ENCODE measurements at regions of chr19 and their contacts with region 1.

Region 1: DNA sequence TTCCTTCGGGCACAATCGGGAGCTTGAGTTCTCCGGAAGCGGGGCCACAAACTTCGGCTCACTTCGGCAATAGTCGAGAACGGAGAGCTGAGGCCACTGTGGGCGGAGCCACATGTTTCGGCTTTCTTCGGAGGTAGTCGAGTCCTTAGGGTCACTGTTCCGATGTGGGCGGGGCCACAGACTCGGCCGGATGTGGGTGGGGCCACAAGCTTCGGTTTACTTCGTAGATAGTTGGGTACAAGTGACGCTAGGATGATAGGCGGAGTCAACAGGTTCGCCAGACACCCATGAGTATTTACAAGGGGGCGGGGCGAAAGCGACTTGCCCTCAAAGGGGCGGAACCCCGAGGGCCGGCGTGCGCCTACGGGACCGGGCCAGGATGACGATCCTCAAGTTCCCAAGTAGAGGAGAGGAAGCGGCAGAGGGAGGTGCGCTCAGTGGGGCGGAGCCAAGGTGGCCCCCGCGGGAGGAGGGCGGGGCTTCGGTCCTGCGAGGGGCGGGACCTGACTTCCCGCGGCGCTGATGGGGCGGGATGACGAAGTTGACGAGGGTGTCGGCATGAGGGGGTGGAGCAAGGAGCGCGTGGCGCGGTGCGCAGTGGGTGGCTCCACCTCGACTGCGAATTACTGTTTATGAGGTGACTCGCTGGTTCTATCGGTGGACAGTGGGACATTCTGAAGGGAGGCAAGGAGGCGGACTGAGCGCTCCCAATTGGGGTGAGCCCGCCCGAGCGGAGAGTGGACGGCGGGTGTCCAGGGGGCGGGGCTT is 539 bp upstream of the MBOAT7 start:
- DNase-seq: peak; percentile 100
- H3K4me3 ChIP-seq: peak overlapping the region; percentile 85
- H3K4me3 Mint-ChIP-seq: peak overlapping the region; percentile 88 to 99 (median 92)
- H3K27ac ChIP-seq: peak overlapping the region; percentile 100
- H3K27ac Mint-ChIP-seq: peak overlapping the region; percentile 97 to 100 (median 100)
- H3K4me1 ChIP-seq: peaks cover 22% of the 10 kb centered on the region
- H3K4me1 Mint-ChIP-seq: peaks cover 38 to 51% (median 41%) of the 10 kb centered on the region in 3 donors
- H3K27me3 ChIP-seq: no peaks in the 10 kb centered on the region
- H3K27me3 Mint-ChIP-seq: peaks cover 0 to 6% of the 10 kb centered on the region in 2 donors

Region 2: GRCh38 chr19:54107951-54108381 is 82.0 kb before region 1 on chr19:
- CTCF ChIA-PET with region 1: no interaction called
- POLR2A ChIA-PET with region 1: no interaction called
- DNase-seq: peak in 1 of 5 donors; percentile 35
- H3K4me3 ChIP-seq: no peak overlapping the region
- H3K4me3 Mint-ChIP-seq: no peak overlapping the region
- H3K27ac ChIP-seq: no peak overlapping the region
- H3K27ac Mint-ChIP-seq: no peak overlapping the region
- H3K4me1 ChIP-seq: peaks cover 7% of the 10 kb centered on the region
- H3K4me1 Mint-ChIP-seq: peaks cover 17 to 29% (median 23%) of the 10 kb centered on the region in 3 donors
- H3K27me3 ChIP-seq: no peaks in the 10 kb centered on the region
- H3K27me3 Mint-ChIP-seq: no peaks in the 10 kb centered on the region

Region 3: DNA sequence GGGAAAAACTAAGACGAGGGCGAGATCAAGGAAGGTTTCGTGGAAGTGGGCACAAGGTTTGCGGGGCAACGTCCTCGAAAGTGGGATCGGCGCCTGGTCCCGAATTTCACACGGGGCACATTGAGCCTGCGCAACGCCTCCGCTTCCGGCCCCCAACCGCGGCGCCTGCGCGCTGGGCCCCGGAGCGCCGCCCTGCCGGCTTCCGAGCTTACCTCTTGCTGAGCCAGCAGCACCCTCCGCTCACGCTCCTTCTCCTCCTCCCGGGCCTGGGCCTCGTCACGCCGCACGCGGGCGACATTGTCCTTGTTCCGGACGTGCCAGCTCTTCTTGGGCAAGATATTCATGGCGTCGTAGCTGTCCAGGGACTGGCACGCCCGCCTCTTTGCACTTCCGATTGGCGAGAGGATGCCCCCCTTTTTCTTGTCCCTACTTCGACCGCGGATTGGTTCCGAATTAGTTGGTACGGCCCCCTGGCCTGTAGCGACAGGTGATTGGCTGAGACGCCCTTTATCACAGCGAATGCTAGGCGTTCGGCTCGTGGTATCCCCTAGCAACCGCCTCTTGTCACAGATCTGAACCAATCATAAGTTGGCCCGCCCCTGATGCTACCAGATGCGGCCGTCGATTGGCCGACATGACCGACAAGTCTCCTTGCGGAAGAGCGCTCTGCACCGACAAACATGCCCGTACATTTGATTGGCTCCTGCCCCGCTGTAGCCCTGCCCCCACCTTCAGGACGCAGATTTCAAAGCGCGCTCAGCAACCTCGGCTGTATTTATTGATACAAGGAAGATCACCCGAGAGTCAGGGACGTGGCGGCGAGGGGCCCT is 30.4 kb before region 1 on chr19 and contains the start of gene LENG1:
- CTCF ChIA-PET with region 1: interaction called, 17 read pairs
- POLR2A ChIA-PET with region 1: interaction called, 49 read pairs
- DNase-seq: peak; percentile 96 to 100 (median 99)
- H3K4me3 ChIP-seq: peak within 1 kb of the TSS; percentile 93
- H3K4me3 Mint-ChIP-seq: peak within 1 kb of the TSS; percentile 89 to 100 (median 99)
- H3K27ac ChIP-seq: peak within 1 kb of the TSS; percentile 85
- H3K27ac Mint-ChIP-seq: peak within 1 kb of the TSS; percentile 92 to 100 (median 99)
- H3K4me1 ChIP-seq: peaks cover 75% of the 10 kb centered on the region
- H3K4me1 Mint-ChIP-seq: peaks cover 57 to 76% (median 73%) of the 10 kb centered on the region in 3 donors
- H3K27me3 ChIP-seq: no peaks in the 10 kb centered on the region
- H3K27me3 Mint-ChIP-seq: peaks cover 4 to 6% of the 10 kb centered on the region in 2 donors
- total RNA-seq, gene LENG1: 4.8 to 6.8 TPM

Region 4: GRCh38 chr19:54201172-54201701 is 11.3 kb after region 1 on chr19:
- CTCF ChIA-PET with region 1: interaction called, 9 read pairs
- POLR2A ChIA-PET with region 1: interaction called, 68 read pairs
- DNase-seq: peak in 1 of 5 donors; percentile 16
- H3K4me3 ChIP-seq: peak overlapping the region; percentile 90
- H3K4me3 Mint-ChIP-seq: peak overlapping the region; percentile 93 to 100 (median 99)
- H3K27ac ChIP-seq: peak overlapping the region; percentile 92
- H3K27ac Mint-ChIP-seq: peak overlapping the region; percentile 95 to 100 (median 99)
- H3K4me1 ChIP-seq: peaks cover 58% of the 10 kb centered on the region
- H3K4me1 Mint-ChIP-seq: peaks cover 48 to 64% (median 50%) of the 10 kb centered on the region in 3 donors
- H3K27me3 ChIP-seq: no peaks in the 10 kb centered on the region
- H3K27me3 Mint-ChIP-seq: peaks cover 0 to 4% of the 10 kb centered on the region in 2 donors

Region 5: GRCh38 chr19:54218960-54219661 is 29.2 kb after region 1 on chr19:
- CTCF ChIA-PET with region 1: no interaction called
- POLR2A ChIA-PET with region 1: no interaction called
- DNase-seq: no peak
- H3K4me3 ChIP-seq: no peak overlapping the region
- H3K4me3 Mint-ChIP-seq: no peak overlapping the region
- H3K27ac ChIP-seq: no peak overlapping the region
- H3K27ac Mint-ChIP-seq: no peak overlapping the region
- H3K4me1 ChIP-seq: no peaks in the 10 kb centered on the region
- H3K4me1 Mint-ChIP-seq: peaks cover 0 to 3% (median 0%) of the 10 kb centered on the region in 3 donors
- H3K27me3 ChIP-seq: no peaks in the 10 kb centered on the region
- H3K27me3 Mint-ChIP-seq: peaks cover 2 to 7% of the 10 kb centered on the region in 2 donors

Region 6: DNA sequence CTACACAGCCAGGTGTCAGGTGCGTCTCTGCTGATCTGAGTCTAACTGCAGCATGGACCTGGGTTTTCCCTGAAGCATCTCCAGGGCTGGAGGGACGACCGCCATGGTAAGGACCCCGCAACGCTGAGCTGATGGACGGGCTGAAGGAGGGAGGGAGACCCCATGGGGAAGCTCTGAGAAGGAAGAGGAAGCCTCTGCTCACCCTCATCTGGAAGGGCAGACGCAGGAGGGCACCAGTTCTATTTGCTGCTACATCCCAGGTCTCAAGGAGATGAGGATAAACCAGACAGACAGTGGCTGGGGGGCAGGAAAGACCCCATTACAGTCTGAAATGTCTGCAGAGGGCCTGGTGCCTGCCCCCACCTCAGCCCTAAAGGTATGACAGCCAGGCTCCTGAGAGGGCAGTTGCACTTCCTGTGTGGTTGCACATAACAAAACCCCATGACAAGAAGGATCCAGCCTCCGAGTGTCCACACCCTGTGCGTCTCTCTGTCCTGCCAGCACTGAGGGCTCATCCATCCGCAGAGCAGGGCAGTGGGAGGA is 383.5 kb after region 1 on chr19 and contains the start of gene LILRA2:
- CTCF ChIA-PET with region 1: no interaction called
- POLR2A ChIA-PET with region 1: no interaction called
- DNase-seq: no peak
- H3K4me3 ChIP-seq: no peak within 1 kb of the TSS
- H3K4me3 Mint-ChIP-seq: peak within 1 kb of the TSS in 1 of 7 donors; percentile 1
- H3K27ac ChIP-seq: no peak within 1 kb of the TSS
- H3K27ac Mint-ChIP-seq: peak within 1 kb of the TSS in 1 of 8 donors; percentile 61
- H3K4me1 ChIP-seq: no peaks in the 10 kb centered on the region
- H3K4me1 Mint-ChIP-seq: peaks cover 0 to 7% (median 1%) of the 10 kb centered on the region in 3 donors
- H3K27me3 ChIP-seq: peaks cover 5% of the 10 kb centered on the region
- H3K27me3 Mint-ChIP-seq: peaks cover 23 to 42% of the 10 kb centered on the region in 2 donors
- total RNA-seq, gene LILRA2: not detected

Measured in CD8-positive, alpha-beta memory T cell (primary cell).